Endothelial cell of umbilical vein (primary cell): ENCODE measurements at regions of chr20 and their contacts with region 1.

Region 1: GRCh38 chr20:41249406-41250281 is 67.9 kb downstream of the ZHX3 start:
- DNase-seq: peak; percentile 92
- H3K4me3 ChIP-seq: peak overlapping the region in 1 of 3 experiments; percentile 63
- H3K27ac ChIP-seq: peak overlapping the region; percentile 99
- H3K4me1 ChIP-seq: peaks cover 67% of the 10 kb centered on the region
- H3K27me3 ChIP-seq: no peaks in the 10 kb centered on the region
- CTCF ChIP-seq: peak in 1 of 2 donors; percentile 34
- POLR2A ChIP-seq: peak; percentile 12

Region 2: GRCh38 chr20:40173872-40174271 is 1075.8 kb before region 1 on chr20:
- CTCF ChIA-PET with region 1: no interaction called
- POLR2A ChIA-PET with region 1: no interaction called
- dilution Hi-C with region 1: no loop called
- intact Hi-C with region 1: no loop called
- DNase-seq: peak; percentile 16
- H3K4me3 ChIP-seq: no peak overlapping the region
- H3K27ac ChIP-seq: no peak overlapping the region
- H3K4me1 ChIP-seq: no peaks in the 10 kb centered on the region
- H3K27me3 ChIP-seq: no peaks in the 10 kb centered on the region
- CTCF ChIP-seq: no peak
- POLR2A ChIP-seq: no peak

Region 3: GRCh38 chr20:40680161-40680959 is 569.3 kb before region 1 on chr20:
- CTCF ChIA-PET with region 1: no interaction called
- POLR2A ChIA-PET with region 1: no interaction called
- dilution Hi-C with region 1: no loop called
- intact Hi-C with region 1: no loop called
- DNase-seq: no peak
- H3K4me3 ChIP-seq: no peak overlapping the region
- H3K27ac ChIP-seq: no peak overlapping the region
- H3K4me1 ChIP-seq: peaks cover 5% of the 10 kb centered on the region
- H3K27me3 ChIP-seq: peaks cover 6 to 13% of the 10 kb centered on the region in 2 experiments
- CTCF ChIP-seq: no peak
- POLR2A ChIP-seq: no peak

Region 4: DNA sequence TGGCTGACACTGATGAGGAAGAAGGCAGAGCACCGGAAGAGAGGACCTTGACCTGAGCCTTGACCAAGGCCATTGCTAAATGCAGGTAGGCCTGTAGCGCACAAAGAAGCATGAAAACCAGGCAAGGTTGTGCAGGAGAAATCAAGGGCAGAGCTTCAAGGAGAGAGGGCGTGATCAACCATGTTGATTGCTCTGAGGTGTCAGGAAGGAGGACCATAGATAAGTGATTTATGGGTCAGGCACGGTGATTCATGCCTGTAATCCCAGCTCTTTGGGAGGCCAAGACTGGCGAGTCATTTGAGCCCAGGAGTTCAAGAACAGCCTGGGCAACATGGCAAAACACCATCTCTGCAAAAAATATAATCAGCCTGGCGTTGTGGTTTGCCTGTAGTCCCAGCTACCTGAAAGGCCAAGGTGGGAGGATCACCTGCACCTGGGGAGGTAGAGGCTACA is 99.9 kb before region 1 on chr20:
- CTCF ChIA-PET with region 1: interaction called, 3 read pairs
- POLR2A ChIA-PET with region 1: no interaction called
- dilution Hi-C with region 1: no loop called
- intact Hi-C with region 1: loop called (anchors 1 kb)
- DNase-seq: peak; percentile 40
- H3K4me3 ChIP-seq: no peak overlapping the region
- H3K27ac ChIP-seq: peak overlapping the region; percentile 96
- H3K4me1 ChIP-seq: peaks cover 86% of the 10 kb centered on the region
- H3K27me3 ChIP-seq: no peaks in the 10 kb centered on the region
- CTCF ChIP-seq: no peak
- POLR2A ChIP-seq: no peak

Region 5: DNA sequence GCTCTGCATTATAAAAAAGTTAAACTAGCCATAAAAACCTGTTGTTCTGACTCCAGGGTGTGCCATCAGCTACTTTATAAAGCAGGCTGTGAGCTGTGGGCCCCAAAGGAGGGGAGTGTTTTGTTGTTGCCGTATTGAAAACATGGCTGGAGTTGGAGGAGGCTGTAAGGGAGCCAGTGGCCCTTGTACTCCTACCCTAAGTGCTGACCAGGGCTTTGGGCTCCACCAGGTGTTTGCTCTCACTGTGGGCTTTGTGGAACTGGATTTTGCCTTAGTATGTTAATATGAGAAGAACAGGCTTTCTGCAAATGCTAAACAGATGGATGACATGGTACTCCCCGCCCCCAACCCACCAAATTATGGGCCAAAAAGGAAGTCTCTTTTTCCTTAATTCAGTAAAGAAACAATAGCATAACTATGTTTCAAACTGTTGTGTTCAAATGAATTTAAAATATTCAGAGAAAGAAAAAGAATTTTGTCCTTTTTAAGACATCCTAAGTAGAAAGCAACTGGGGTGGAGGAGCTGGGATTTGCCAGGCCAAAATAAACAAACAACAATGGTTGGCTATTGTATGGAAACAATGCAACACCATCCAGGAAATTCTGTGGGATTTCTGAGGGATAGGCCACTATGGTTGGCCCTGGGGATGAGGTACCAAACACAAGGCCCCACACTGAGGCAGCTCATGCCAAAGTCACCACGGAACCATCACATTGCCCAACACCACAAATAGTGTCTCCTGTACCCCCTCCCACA is 49.0 kb before region 1 on chr20:
- CTCF ChIA-PET with region 1: interaction called, 3 read pairs
- POLR2A ChIA-PET with region 1: no interaction called
- dilution Hi-C with region 1: no loop called
- intact Hi-C with region 1: loop called (anchors 2 kb)
- DNase-seq: peak; percentile 87
- H3K4me3 ChIP-seq: no peak overlapping the region
- H3K27ac ChIP-seq: peak overlapping the region; percentile 63
- H3K4me1 ChIP-seq: peaks cover 18% of the 10 kb centered on the region
- H3K27me3 ChIP-seq: no peaks in the 10 kb centered on the region
- CTCF ChIP-seq: no peak
- POLR2A ChIP-seq: no peak

Region 6: DNA sequence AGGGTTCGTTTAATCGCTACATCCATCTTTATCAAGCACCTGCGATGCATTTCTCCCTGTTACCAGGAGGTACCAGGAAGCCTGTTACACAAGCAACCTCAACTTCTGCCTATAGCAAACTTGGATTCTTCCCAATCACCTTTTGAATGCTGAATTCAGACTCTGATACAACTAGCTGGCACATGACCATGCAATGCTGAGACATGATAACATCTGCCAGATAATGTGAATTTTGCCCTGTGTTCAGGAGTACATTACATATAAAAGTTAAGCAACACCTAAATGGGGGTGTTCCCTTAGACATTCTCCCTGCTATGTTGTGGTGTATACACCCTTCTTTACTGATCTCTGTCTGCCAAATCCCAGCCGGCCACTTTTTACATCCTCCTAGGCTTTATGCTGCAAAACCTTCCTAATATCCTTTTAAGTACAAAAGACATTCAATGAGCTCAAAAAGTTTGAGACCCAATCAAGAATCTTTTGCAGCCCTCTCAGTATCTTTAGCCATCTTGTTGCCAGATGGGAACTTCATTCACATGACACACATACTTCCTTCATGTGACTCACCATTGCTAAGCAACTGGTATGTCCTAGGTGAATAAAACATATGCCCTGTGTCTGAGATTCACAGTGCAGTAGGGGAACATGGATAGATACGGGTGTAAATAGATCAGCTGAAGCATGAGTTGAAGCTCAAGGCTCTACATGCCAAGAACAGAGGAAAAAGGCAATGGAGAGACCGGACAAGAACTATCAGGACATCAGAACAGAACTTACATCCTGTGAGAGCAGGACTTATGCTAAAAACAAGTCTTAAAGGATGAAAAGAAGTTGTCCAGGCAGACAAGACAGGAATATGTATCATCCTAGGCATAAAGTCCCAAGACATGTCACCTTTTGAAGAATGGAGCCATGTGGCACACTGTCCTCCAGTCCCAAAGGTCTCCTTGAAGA is 16.4 kb before region 1 on chr20:
- CTCF ChIA-PET with region 1: interaction called, 16 read pairs
- POLR2A ChIA-PET with region 1: no interaction called
- dilution Hi-C with region 1: no loop called
- intact Hi-C with region 1: loop called (anchors 1 kb)
- DNase-seq: peak; percentile 59
- H3K4me3 ChIP-seq: no peak overlapping the region
- H3K27ac ChIP-seq: peak overlapping the region; percentile 40
- H3K4me1 ChIP-seq: peaks cover 17% of the 10 kb centered on the region
- H3K27me3 ChIP-seq: no peaks in the 10 kb centered on the region
- CTCF ChIP-seq: no peak
- POLR2A ChIP-seq: no peak

Region 7: GRCh38 chr20:41293269-41294037 is 43.8 kb after region 1 on chr20:
- CTCF ChIA-PET with region 1: no interaction called
- POLR2A ChIA-PET with region 1: no interaction called
- dilution Hi-C with region 1: no loop called
- intact Hi-C with region 1: loop called (anchors 1 kb)
- DNase-seq: no peak
- H3K4me3 ChIP-seq: no peak overlapping the region
- H3K27ac ChIP-seq: no peak overlapping the region
- H3K4me1 ChIP-seq: no peaks in the 10 kb centered on the region
- H3K27me3 ChIP-seq: no peaks in the 10 kb centered on the region
- CTCF ChIP-seq: no peak
- POLR2A ChIP-seq: no peak

Region 8: DNA sequence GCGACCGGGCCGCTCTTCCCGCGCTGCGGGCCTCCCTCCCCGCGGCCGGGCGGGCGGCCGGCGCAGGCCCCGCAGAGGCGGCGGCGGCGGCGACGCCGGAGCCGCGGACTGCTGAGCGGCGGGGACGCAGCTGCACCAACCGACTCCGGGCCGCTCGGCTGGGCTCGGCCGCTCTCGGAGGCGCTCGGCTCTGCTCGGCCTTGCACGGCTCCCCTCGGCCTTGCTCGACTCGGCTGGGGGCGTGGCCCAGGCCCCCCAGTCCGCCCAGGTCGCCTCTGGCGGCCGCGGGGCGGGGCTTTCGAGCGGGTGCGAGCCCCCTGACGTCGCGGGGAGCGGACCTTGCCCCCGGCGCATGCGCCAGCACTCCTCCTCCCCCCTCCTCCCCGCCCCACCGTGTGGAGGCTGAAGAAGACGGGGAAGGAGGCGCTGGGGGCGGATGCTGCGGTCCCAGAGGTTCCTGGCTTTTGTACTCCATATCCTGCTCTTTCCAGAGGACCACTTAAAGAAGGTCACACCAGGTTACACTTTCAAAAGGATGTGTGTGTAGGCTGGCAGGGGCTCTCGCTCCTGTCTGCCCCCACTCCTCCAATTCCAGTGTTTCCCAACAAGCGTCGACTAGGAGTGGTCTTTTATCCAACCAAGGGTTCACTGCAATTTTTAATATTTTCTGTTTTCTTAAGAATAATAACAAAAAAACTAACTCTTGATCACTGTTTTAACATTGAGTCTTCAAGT is 68.1 kb after region 1 on chr20 and contains the start of gene ZHX3:
- CTCF ChIA-PET with region 1: interaction called, 3 read pairs
- POLR2A ChIA-PET with region 1: no interaction called
- dilution Hi-C with region 1: no loop called
- intact Hi-C with region 1: loop called (anchors 1 kb)
- DNase-seq: peak; percentile 97
- H3K4me3 ChIP-seq: peak within 1 kb of the TSS; percentile 76 to 87 (median 79)
- H3K27ac ChIP-seq: peak within 1 kb of the TSS; percentile 70
- H3K4me1 ChIP-seq: peaks cover 18% of the 10 kb centered on the region
- H3K27me3 ChIP-seq: no peaks in the 10 kb centered on the region
- CTCF ChIP-seq: no peak
- POLR2A ChIP-seq: peak; percentile 82
- total RNA-seq, gene ZHX3: 15.1 and 17.8 TPM in 2 replicates

Region 9: DNA sequence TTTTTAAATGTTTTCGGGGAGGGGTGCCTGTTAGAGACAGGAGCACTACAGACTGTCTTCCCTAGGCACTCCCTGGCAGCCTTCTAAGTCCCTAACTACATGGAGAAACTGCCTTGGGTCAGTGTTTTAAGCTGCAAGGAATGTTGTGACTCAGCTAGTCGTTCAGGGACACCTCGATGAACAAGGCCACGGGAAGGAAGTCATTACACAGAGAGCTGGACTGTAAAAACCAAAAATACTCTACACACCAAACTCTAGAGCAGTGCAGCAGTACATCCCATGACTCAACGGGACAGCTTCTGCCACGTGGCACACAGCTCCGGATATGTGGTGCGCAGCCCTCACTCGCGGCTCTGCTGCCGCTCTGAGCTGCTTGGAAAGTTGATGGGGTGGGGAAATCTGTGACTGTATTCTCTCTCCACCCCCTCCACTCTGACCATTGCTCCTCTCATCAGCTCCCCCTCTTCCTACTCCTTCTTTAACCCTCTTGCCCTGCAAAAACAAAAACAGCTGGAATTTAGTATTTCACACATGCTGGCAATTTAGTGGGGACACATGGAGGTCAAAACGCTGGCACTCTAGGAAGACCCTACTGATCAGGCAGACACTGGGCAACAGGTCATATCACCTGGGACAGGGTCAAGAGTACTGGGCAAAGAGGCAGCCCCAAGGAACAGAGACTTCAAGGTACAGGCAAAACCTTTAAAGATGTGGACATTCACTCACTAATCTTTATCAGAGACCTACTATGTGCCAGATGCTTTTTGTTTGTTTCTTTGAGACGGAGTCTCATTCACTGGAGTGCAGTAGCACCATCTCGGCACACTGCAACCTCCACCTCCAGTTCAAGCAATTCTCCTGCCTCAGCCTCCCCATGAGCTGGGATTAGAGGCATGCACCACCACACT is 80.0 kb after region 1 on chr20:
- CTCF ChIA-PET with region 1: interaction called, 7 read pairs
- POLR2A ChIA-PET with region 1: interaction called, 5 read pairs
- dilution Hi-C with region 1: no loop called
- intact Hi-C with region 1: loop called (anchors 1 kb)
- DNase-seq: peak; percentile 94
- H3K4me3 ChIP-seq: no peak overlapping the region
- H3K27ac ChIP-seq: peak overlapping the region; percentile 89
- H3K4me1 ChIP-seq: peaks cover 20% of the 10 kb centered on the region
- H3K27me3 ChIP-seq: no peaks in the 10 kb centered on the region
- CTCF ChIP-seq: no peak
- POLR2A ChIP-seq: peak; percentile 66